ENCODE measurements at regions of chr9 and their contacts with region 1.

Region 1: DNA sequence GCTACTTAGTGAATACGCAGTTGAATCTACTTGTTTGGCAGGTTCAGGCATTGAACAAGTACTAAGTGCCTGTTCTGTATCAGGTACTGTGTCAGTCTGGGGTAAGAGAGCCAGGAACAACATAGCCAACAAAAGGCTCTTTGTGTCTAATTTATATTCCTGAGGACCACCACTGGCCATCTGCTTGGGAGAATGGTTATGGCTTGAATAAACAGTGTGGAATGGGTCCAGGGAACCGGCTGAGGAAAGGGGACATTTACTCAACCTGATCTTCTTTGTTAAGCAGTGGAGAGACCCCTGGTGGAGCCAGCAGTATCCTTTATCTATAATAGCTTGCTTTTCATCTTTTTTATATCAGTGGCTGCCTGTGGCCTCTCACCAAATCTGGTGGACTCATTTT is 38.6 kb downstream of the EXOSC2 start:
- DNase-seq: peak in 2 of 9 experiments; percentile 12 to 24
- ATAC-seq: no peak
- H3K4me3 ChIP-seq: no peak overlapping the region
- H3K4me3 Mint-ChIP-seq: no peak overlapping the region
- H3K27ac ChIP-seq: no peak overlapping the region
- H3K27ac Mint-ChIP-seq: no peak overlapping the region
- H3K4me1 ChIP-seq: no peaks in the 10 kb centered on the region
- H3K4me1 Mint-ChIP-seq: peaks cover 28% of the 10 kb centered on the region
- H3K27me3 ChIP-seq: no peaks in the 10 kb centered on the region
- H3K27me3 Mint-ChIP-seq: no peaks in the 10 kb centered on the region
- CTCF ChIP-seq: no peak

Region 2: GRCh38 chr9:130701056-130702022 is 30.8 kb before region 1 on chr9:
- CTCF ChIA-PET with region 1: interaction called, 13 read pairs
- POLR2A ChIA-PET with region 1: no interaction called
- intact Hi-C with region 1: no loop called
- DNase-seq: peak; percentile 44 to 80 (median 72)
- ATAC-seq: peak; percentile 95
- H3K4me3 ChIP-seq: no peak overlapping the region
- H3K4me3 Mint-ChIP-seq: no peak overlapping the region
- H3K27ac ChIP-seq: no peak overlapping the region
- H3K27ac Mint-ChIP-seq: no peak overlapping the region
- H3K4me1 ChIP-seq: no peaks in the 10 kb centered on the region
- H3K4me1 Mint-ChIP-seq: peaks cover 18% of the 10 kb centered on the region
- H3K27me3 ChIP-seq: no peaks in the 10 kb centered on the region
- H3K27me3 Mint-ChIP-seq: no peaks in the 10 kb centered on the region
- CTCF ChIP-seq: peak; percentile 87

Region 3: GRCh38 chr9:130759738-130760137 is 27.6 kb after region 1 on chr9:
- CTCF ChIA-PET with region 1: interaction called, 3 read pairs
- POLR2A ChIA-PET with region 1: no interaction called
- intact Hi-C with region 1: loop called in 1 of 2 experiments (anchors 1 kb)
- DNase-seq: no peak
- ATAC-seq: no peak
- H3K4me3 ChIP-seq: no peak overlapping the region
- H3K4me3 Mint-ChIP-seq: no peak overlapping the region
- H3K27ac ChIP-seq: no peak overlapping the region
- H3K27ac Mint-ChIP-seq: no peak overlapping the region
- H3K4me1 ChIP-seq: peaks cover 5% of the 10 kb centered on the region
- H3K4me1 Mint-ChIP-seq: peaks cover 33% of the 10 kb centered on the region
- H3K27me3 ChIP-seq: no peaks in the 10 kb centered on the region
- H3K27me3 Mint-ChIP-seq: no peaks in the 10 kb centered on the region
- CTCF ChIP-seq: no peak

Region 4: GRCh38 chr9:130834371-130835311 is 102.5 kb after region 1 on chr9 and contains the start of gene ABL1:
- CTCF ChIA-PET with region 1: no interaction called
- POLR2A ChIA-PET with region 1: no interaction called
- intact Hi-C with region 1: no loop called
- DNase-seq: peak; percentile 42 to 91 (median 65)
- ATAC-seq: peak; percentile 86
- H3K4me3 ChIP-seq: peak within 1 kb of the TSS; percentile 65
- H3K4me3 Mint-ChIP-seq: peak within 1 kb of the TSS; percentile 97
- H3K27ac ChIP-seq: peak within 1 kb of the TSS; percentile 44 to 58
- H3K27ac Mint-ChIP-seq: peak within 1 kb of the TSS; percentile 92
- H3K4me1 ChIP-seq: peaks cover 14% of the 10 kb centered on the region
- H3K4me1 Mint-ChIP-seq: peaks cover 47% of the 10 kb centered on the region
- H3K27me3 ChIP-seq: no peaks in the 10 kb centered on the region
- H3K27me3 Mint-ChIP-seq: no peaks in the 10 kb centered on the region
- CTCF ChIP-seq: no peak
- total RNA-seq, gene ABL1: 37.5 to 38.0 TPM